ENCODE measurements at regions of chr17 and their contacts with region 1.

Region 1: GRCh38 chr17:76643553-76644148 is at the start of gene ST6GALNAC1:
- DNase-seq: no peak
- H3K4me3 ChIP-seq: no peak within 1 kb of the TSS
- CTCF ChIP-seq: no peak

Region 2: GRCh38 chr17:76452660-76453430 is 190.8 kb before region 1 on chr17 and contains the start of gene UBE2O:
- in situ Hi-C with region 1: loop called (anchors 25 kb)
- DNase-seq: peak; percentile 47
- H3K4me3 ChIP-seq: peak within 1 kb of the TSS; percentile 80
- CTCF ChIP-seq: peak; percentile 42

Region 3: GRCh38 chr17:76569607-76570279 is 73.9 kb before region 1 on chr17:
- in situ Hi-C with region 1: loop called (anchors 10 kb)
- DNase-seq: no peak
- H3K4me3 ChIP-seq: no peak overlapping the region
- CTCF ChIP-seq: no peak

Region 4: DNA sequence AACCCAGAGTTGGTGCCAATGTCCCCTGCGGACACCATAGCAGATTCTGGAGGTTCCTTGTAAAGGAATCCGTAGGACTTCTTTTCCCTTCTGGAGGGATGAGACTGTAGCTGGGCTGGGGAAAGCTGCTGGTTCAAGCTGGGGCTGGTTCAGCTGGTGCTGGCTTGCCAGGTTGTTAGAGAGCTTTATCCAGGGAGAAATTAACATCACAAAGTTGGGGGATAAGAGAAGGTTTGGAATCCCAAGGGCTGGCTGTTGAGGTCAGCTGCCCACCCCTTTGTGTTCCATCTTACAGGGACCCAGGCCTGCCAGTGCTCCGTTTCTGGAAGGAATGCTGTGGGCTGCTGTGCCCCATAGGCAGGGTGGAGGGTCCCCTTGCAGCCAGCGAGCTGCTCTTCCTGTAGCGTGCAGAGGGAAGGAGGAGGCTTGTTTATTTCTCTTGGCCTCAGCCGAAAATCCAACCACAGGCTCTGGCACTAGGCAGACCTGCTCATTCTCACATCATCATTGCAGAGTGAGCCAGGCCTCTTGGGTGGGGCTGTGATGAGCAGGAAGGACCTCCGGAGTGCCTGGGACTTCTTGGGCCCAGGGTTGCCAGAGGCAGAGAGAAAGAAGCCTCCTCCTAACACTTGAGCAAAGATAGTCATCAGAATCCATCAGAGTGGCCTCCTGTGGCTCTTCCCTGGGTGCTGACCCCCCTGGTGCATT is 748.2 kb after region 1 on chr17:
- in situ Hi-C with region 1: no loop called
- DNase-seq: peak; percentile 95
- H3K4me3 ChIP-seq: no peak overlapping the region
- CTCF ChIP-seq: no peak

Measured in astrocyte of the cerebellum (primary cell).